ENCODE measurements at regions of chr9 and their contacts with region 1.

Region 1: GRCh38 chr9:38761334-38761733 is 41.4 kb upstream of the FAM240B start:
- DNase-seq: no peak
- ATAC-seq: no peak
- H3K4me3 ChIP-seq: no peak overlapping the region
- H3K27ac ChIP-seq: no peak overlapping the region
- H3K4me1 ChIP-seq: no peaks in the 10 kb centered on the region
- H3K27me3 ChIP-seq: no peaks in the 10 kb centered on the region
- CTCF ChIP-seq: no peak
- POLR2A ChIP-seq: no peak

Region 2: GRCh38 chr9:38620483-38621433 is 140.6 kb before region 1 on chr9 and contains the start of gene ANKRD18A:
- intact Hi-C with region 1: no loop called
- DNase-seq: peak; percentile 26 to 84 (median 79)
- ATAC-seq: peak; percentile 55 to 89 (median 87)
- H3K4me3 ChIP-seq: peak within 1 kb of the TSS; percentile 14 to 66 (median 49)
- H3K27ac ChIP-seq: peak within 1 kb of the TSS in 6 of 12 donors; percentile 2 to 68 (median 35)
- H3K4me1 ChIP-seq: peaks cover 0 to 31% (median 10%) of the 10 kb centered on the region in 12 donors
- H3K27me3 ChIP-seq: peaks cover 8 to 85% (median 41%) of the 10 kb centered on the region in 9 donors
- CTCF ChIP-seq: peak; percentile 31 to 57 (median 42)
- POLR2A ChIP-seq: no peak
- total RNA-seq, gene ANKRD18A: 0.20 to 6.8 (median 3.1) TPM

Region 3: DNA sequence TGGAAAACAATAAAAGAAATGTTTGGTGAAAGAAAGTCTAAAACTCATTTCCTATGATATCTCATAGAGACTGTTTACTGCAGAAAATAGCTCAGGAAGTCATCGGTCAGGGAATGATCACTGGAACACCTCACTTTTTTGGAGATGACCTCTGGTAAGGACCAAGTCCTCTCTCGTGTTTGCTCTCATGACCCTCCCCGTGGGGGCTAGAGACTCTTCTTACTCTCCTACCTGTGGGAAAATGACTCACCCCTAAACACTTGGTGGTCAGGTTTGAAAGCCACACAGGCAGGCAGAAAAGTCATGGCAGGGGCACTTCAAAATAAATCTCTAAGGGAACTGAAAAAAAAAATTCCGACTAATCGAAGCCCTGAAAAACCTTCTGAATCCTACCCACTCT is 89.6 kb before region 1 on chr9:
- intact Hi-C with region 1: loop called in 1 of 10 experiments (anchors 10 kb)
- DNase-seq: no peak
- ATAC-seq: no peak
- H3K4me3 ChIP-seq: no peak overlapping the region
- H3K27ac ChIP-seq: peak overlapping the region in 2 of 12 donors; percentile 8 to 32
- H3K4me1 ChIP-seq: peaks cover 0 to 16% (median 5%) of the 10 kb centered on the region in 12 donors
- H3K27me3 ChIP-seq: no peaks in the 10 kb centered on the region
- CTCF ChIP-seq: no peak
- POLR2A ChIP-seq: no peak

Region 4: DNA sequence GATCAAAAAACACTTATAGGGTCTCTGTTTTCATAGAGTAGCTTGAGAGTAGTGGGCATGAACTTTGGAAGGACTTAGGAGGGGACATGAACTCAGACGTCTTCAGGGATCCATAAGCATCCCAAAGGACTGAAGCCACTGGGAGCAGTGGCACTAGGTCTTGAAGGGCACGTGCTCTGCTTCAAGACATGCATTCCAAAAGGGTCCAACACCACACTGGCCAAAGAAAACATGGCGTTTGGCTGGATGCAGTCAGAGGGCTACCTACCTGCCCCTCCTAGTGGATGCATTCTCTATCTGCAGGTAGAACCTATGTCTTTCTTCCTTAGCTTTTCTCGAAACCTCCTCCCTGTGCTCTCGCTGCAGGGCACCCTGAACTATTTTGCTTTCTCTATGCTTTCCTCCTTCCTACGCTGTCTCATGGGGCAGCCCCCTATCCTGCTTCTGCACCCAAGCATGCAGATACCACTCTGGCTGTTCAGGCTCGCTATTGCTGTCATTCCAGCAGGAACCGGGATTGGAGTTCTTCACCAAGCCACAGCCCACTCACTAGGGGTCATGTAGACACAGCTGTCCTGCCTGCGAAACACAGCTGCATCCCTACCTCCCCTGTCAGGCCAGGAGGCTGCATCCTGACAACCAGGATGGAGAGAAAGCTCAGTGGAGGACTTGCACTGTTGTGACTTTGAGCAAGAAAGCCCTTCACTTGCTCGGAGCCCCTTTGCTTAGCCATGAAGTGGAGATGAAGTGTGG is 53.3 kb before region 1 on chr9:
- intact Hi-C with region 1: no loop called
- DNase-seq: no peak
- ATAC-seq: no peak
- H3K4me3 ChIP-seq: no peak overlapping the region
- H3K27ac ChIP-seq: no peak overlapping the region
- H3K4me1 ChIP-seq: peaks cover 0 to 11% (median 0%) of the 10 kb centered on the region in 12 donors
- H3K27me3 ChIP-seq: no peaks in the 10 kb centered on the region
- CTCF ChIP-seq: no peak
- POLR2A ChIP-seq: no peak

Measured in heart left ventricle (tissue), 16 donors.